Caco-2 (cell line): ENCODE measurements at regions of chr2 and their contacts with region 1.

Region 1: DNA sequence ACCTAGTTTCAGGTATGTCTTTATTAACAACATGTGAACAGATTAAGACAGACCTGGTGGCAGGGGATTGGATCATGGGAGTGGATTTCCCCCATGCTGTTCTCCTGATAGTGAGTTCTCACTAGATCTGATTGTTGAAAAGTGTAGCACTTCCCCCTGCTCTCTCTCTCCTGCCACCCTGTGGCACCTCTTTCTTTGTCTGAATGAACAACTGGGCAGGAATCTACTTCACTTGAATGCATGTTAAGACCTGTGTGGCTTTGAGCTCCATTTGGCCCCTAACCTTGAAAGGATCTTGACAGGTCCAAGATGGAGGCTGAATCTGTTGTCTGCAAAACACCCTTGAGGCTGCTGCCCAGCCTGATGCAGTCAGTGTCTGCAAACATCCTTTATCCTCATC is 194.4 kb downstream of the RNF144A start:
- DNase-seq: no peak
- H3K4me3 ChIP-seq: no peak overlapping the region
- H3K4me3 Mint-ChIP-seq: no peak overlapping the region
- H3K27ac Mint-ChIP-seq: no peak overlapping the region
- H3K4me1 ChIP-seq: no peaks in the 10 kb centered on the region
- H3K4me1 Mint-ChIP-seq: no peaks in the 10 kb centered on the region
- H3K27me3 ChIP-seq: no peaks in the 10 kb centered on the region
- H3K27me3 Mint-ChIP-seq: peaks cover 16% of the 10 kb centered on the region
- CTCF ChIP-seq: peak in 1 of 2 experiments; percentile 24

Region 2: DNA sequence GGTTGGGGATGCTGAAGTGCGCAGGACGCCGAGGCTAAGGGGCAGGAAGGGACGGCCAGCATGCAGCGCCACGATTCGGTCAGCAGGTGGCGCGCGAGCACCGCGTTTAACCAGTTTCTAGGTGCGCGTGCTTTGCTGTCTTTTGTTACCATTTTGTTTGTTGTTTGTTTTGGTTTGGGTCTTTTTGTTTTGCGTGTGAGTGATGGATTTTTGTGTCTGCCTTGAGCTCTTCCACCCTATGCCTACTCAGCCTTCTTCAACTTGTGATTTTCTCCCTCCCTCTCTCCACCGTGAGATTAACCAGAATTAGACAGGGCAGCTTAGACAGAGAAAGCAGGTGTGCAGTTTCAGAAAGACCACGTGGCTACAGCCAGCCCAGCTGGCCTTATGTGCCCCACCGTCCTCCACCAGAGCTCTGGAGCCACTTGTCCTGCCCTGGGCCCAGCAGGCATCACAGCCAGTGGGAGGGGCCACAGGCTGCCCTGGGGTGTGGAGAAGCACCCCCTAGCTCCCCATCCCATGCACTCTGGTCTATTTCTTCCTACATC is 14.2 kb before region 1 on chr2:
- CTCF ChIA-PET with region 1: no interaction called
- POLR2A ChIA-PET with region 1: no interaction called
- intact Hi-C with region 1: loop called (anchors 1 kb)
- DNase-seq: peak in 1 of 2 experiments; percentile 77
- H3K4me3 ChIP-seq: no peak overlapping the region
- H3K4me3 Mint-ChIP-seq: peak overlapping the region; percentile 27
- H3K27ac Mint-ChIP-seq: no peak overlapping the region
- H3K4me1 ChIP-seq: no peaks in the 10 kb centered on the region
- H3K4me1 Mint-ChIP-seq: peaks cover under 1% of the 10 kb centered on the region
- H3K27me3 ChIP-seq: no peaks in the 10 kb centered on the region
- H3K27me3 Mint-ChIP-seq: peaks cover 12% of the 10 kb centered on the region
- CTCF ChIP-seq: peak; percentile 93 to 96